MCF 10A (cell line): ENCODE measurements at regions of chr11 and their contacts with region 1.

Region 1: DNA sequence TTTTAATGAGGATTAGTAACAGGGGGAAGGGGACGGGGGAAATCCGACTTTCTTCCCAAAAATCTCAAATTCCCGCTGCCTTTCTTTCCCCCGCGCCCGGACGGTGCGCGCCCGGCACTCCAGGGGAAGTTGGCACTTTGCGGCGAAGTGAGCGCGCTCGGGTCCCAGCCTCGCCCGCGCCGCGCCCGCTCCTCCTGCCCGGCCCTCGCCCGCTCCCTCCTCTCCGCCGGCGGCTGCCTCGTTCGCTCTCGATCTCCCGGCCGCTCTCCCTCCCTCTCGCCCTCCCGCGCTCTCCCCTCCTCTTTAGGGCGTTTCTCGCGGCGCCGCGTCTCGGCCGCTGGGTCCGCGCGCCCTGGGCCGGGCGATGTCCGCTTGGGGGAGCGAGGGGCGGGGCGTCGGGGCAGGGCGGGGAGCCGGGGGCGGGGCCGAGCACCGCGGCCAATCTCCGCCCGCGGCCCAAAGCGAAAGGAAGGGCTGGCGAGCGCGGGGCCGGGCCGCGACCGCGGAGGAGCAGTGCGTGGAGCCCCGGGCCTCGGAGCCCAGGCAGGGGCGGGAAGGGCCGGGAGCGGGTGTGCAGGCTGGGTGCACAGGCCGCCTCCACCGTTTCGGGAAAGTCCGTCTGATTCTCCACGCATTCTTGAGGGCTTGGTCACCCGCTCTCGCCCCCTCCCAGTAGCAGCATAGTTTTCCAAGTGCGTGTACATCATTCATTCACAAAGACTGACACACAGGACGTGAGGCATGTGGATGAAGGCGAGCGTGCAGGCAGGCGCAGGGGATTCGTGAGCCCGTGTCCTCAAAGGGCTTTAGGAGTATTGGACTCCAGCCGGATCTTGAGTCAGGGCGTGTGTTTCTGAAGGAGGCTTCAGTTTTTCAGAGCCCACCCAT is 65.1 kb downstream of the ETS1 start:
- DNase-seq: peak; percentile 96
- H3K4me3 Mint-ChIP-seq: peak overlapping the region; percentile 78
- H3K27ac Mint-ChIP-seq: peak overlapping the region; percentile 79
- H3K4me1 Mint-ChIP-seq: peaks cover 54% of the 10 kb centered on the region
- H3K27me3 Mint-ChIP-seq: no peaks in the 10 kb centered on the region
- CTCF ChIP-seq: no peak

Region 2: DNA sequence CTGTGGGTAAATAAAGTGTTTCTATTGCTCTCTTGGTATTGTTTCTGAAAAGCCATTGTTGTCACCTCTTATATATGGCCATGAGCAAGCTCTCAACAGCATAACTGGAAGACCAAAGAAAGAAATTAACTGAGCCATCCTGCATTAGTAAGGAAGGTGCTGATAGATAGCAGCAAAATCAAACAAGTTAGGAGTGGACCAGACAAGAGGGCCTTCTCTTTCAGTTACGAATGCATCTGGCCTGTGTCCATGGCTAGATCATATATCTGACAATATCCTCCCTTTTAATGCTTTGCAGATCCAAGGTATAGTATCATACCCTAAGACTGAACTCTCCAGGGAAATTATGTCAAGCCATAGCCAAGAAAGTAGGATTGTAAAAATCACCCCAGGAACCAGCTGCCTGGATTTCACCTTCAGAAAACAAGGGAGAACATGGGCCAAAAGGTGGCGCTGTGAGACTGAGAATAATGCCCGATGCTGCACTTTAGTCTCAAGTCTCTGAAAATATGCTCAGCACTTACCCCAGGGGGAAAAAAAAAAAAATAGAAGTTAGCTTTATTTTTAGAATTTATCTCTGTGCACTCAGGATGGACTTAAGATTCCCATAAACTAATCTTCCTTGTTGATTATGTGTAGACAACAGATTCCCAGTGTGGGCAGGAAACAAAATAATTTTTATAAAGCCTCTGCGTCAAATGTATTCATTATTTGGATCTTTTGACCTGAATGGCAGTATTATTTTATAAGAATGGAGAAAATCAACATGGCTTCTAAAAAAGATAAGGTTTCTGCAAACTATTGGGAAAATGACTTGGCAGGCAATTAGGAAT is 350.0 kb before region 1 on chr11:
- CTCF ChIA-PET with region 1: interaction called, 3 read pairs
- POLR2A ChIA-PET with region 1: no interaction called
- intact Hi-C with region 1: loop called (anchors 5 kb)
- DNase-seq: peak; percentile 87
- H3K4me3 Mint-ChIP-seq: no peak overlapping the region
- H3K27ac Mint-ChIP-seq: peak overlapping the region; percentile 88
- H3K4me1 Mint-ChIP-seq: peaks cover 23% of the 10 kb centered on the region
- H3K27me3 Mint-ChIP-seq: no peaks in the 10 kb centered on the region
- CTCF ChIP-seq: peak; percentile 78

Region 3: GRCh38 chr11:128201801-128202200 is 320.5 kb before region 1 on chr11:
- CTCF ChIA-PET with region 1: no interaction called
- POLR2A ChIA-PET with region 1: no interaction called
- intact Hi-C with region 1: no loop called
- DNase-seq: no peak
- H3K4me3 Mint-ChIP-seq: no peak overlapping the region
- H3K27ac Mint-ChIP-seq: peak overlapping the region; percentile 49
- H3K4me1 Mint-ChIP-seq: peaks cover 14% of the 10 kb centered on the region
- H3K27me3 Mint-ChIP-seq: no peaks in the 10 kb centered on the region
- CTCF ChIP-seq: no peak

Region 4: DNA sequence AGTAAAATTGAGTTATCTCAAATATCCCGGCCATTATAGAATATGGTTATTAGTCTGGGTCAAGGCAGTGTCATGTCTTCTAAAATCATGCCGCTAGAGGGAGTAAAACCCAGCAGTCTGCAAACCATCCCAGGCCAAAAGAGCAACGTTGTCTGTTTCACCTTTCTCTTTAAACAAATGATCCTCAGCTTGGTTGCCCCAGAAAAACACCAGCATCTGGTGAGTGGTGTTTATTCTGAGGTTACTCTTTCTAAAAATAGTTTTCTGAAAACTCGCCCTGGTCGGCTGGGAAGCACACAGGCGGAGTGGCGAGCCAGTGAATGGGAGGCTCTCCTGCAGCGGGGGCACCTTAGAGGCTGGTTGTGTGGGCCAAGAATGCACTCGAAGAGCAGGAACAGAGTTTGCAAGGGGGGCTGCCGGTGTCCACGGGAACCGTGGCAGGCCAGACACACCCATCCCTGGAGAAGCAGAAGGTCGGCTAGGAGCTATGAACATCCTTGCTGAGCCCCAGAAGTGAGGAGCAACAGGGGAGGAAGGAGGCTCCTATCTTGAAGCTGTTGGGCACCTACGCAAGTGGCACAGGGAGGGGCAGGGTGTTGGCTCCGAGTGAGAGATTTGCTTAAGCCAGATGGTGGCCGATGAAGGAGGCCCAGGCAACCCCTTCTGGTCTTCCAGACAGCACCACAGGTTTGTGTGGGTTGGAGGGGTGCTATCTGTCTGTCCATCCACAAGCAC is 232.0 kb before region 1 on chr11:
- CTCF ChIA-PET with region 1: interaction called, 3 read pairs
- POLR2A ChIA-PET with region 1: interaction called, 3 read pairs
- intact Hi-C with region 1: loop called (anchors 1 kb)
- DNase-seq: peak; percentile 72
- H3K4me3 Mint-ChIP-seq: no peak overlapping the region
- H3K27ac Mint-ChIP-seq: no peak overlapping the region
- H3K4me1 Mint-ChIP-seq: peaks cover 15% of the 10 kb centered on the region
- H3K27me3 Mint-ChIP-seq: no peaks in the 10 kb centered on the region
- CTCF ChIP-seq: peak; percentile 76

Region 5: DNA sequence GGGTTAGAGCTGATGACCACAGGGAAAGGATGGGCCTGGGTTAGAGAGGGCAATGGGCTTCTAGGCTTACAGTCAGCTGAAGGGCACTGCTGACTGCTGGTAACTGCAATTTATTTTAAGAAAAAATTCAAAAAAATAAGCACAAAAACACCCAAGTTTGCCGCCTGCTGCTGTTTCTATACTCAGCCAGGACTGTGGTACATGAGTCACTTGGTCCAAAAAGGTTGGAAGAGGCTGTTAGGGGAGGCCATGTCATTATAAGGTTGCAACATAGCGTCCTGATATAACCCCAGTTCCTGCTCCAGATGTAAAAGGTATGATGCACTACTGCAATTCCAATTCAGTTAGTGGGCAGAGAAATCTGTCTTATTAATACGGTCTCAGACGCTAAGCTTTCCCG is 33.8 kb before region 1 on chr11:
- CTCF ChIA-PET with region 1: interaction called, 10 read pairs
- POLR2A ChIA-PET with region 1: interaction called, 27 read pairs
- intact Hi-C with region 1: loop called (anchors 1 kb)
- DNase-seq: peak; percentile 92
- H3K4me3 Mint-ChIP-seq: no peak overlapping the region
- H3K27ac Mint-ChIP-seq: no peak overlapping the region
- H3K4me1 Mint-ChIP-seq: peaks cover 44% of the 10 kb centered on the region
- H3K27me3 Mint-ChIP-seq: no peaks in the 10 kb centered on the region
- CTCF ChIP-seq: no peak

Region 6: DNA sequence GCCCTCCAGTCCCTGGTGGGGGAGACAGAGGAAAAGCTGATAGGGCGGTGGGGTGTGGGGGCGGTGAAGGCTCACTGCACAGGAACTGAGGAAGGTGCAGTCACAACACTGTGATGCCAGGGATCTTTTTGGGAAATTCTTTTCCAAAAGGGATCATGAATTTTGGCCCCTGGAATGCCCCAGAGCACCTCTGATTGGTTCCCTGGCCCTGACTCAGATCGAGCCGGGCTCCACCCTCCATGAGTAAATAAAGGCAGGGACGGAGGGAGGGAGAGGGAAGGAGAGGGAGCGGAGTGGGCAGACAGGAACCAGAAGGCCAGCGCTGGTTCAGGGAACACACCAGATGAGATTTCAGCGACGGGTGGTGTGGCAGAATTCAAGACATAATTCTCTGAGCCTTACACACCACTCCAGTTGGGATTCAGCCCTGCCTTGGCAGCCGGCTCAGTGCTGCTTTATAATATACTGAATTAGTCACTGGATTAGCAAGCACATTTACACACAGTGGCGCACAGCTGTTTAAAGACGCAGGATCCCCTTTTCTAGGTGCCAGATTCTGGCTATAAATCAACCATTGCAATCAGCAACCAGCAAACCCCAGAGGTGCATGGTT is 15.2 kb before region 1 on chr11:
- CTCF ChIA-PET with region 1: interaction called, 35 read pairs
- POLR2A ChIA-PET with region 1: interaction called, 124 read pairs
- intact Hi-C with region 1: loop called (anchors 2 kb)
- DNase-seq: peak; percentile 88
- H3K4me3 Mint-ChIP-seq: peak overlapping the region; percentile 64
- H3K27ac Mint-ChIP-seq: peak overlapping the region; percentile 89
- H3K4me1 Mint-ChIP-seq: peaks cover 69% of the 10 kb centered on the region
- H3K27me3 Mint-ChIP-seq: no peaks in the 10 kb centered on the region
- CTCF ChIP-seq: no peak

Region 7: DNA sequence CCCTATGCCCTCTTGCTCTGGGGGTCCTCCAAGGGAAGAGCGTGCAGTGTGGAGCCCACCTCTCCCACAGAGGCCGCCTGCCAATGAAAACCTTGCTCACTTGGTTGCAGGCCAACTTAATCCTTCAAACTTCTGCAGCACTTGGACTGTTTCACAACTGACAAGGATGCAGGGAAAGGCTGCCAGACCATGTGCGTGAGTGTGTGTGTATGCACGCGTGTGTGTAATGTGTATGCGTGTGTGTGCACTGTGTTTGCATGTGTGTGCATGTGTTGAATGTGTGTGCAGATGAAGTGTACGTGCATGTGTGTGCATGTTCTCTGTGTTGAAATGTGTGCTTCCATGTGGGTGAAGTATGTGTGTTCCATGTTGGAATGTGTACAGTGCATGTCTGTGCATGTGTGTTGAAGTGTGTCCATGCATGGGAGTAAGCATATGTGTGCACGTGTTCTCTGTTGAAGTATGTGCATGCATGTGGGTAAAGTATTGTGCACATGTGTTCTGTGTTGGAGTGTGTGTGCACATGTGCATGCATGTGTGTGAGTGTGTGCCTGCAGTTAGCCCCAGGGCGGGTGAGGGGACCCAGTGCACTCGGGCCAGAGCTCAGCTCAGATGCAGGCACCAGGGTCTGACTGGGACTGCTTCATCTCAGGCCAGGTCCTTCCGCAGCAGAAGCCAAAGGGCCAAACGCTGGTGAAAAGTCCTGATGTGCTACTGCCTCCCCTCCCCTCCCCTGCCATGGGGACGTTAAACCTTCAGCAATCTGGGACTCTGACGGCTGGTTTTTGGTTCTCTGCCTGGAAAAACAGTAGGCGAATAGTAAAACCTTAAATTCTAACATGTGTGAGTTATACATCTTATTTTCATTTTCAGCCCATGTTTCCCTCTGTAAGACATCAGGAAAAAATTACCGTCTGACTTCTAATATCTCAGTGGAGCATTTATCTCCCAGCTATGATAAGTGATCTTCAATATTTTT is 243.6 kb after region 1 on chr11:
- CTCF ChIA-PET with region 1: no interaction called
- POLR2A ChIA-PET with region 1: no interaction called
- intact Hi-C with region 1: no loop called
- DNase-seq: no peak
- H3K4me3 Mint-ChIP-seq: no peak overlapping the region
- H3K27ac Mint-ChIP-seq: no peak overlapping the region
- H3K4me1 Mint-ChIP-seq: no peaks in the 10 kb centered on the region
- H3K27me3 Mint-ChIP-seq: no peaks in the 10 kb centered on the region
- CTCF ChIP-seq: no peak